PC-9 (cell line): ENCODE measurements at regions of chr17 and their contacts with region 1.

Region 1: DNA sequence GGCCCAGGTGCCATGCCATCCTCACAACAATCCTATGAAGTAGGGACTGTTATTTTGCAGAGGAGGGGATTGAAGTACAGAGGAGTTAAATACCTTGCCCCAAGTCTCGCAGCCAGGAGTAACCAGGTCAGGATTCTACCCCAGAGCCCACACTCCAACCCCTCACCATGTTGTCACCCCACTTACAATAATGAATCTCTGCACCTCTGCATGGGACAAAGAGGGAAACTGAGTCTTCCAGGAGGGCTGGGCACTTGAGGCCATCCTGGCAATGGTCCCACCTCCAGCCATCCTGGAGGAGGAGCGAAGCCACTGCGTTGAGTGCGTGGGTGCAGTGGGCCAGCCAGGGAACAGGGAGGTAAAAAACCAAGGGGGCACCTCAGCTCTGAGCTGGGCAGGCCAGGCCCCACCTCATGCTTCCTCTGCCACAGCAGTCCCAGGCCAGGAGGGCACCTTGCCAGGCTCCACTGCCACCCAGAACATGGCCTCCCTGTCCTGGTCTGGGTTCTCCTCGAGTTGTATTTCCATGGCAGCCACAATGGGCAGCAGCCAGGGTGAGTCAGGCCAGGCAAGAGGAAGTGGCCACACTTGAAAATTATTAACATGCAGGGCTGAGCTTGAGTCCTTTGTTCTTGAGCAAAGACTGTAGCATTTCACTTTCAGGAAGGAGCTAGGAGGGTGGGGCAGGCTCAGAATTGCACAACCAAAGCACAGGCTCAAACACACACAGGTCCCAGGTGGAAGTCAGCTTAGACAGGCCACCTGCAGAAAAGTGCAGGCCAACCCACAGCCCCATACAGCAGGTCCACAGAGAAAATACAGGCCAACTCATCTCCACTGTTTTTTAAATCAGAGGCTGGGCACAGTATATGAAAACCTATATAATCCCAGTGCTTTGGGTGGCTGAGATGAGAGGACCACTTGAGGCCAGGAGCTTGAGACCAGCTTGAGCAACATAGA is 52.1 kb downstream of the CUEDC1 start:
- DNase-seq: peak; percentile 87 to 99
- H3K4me3 ChIP-seq: no peak overlapping the region
- H3K27ac ChIP-seq: peak overlapping the region; percentile 69
- H3K4me1 ChIP-seq: peaks cover 65% of the 10 kb centered on the region
- H3K27me3 ChIP-seq: no peaks in the 10 kb centered on the region
- CTCF ChIP-seq: no peak

Region 2: GRCh38 chr17:56679115-56679766 is 1223.8 kb before region 1 on chr17:
- CTCF ChIA-PET with region 1: no interaction called
- POLR2A ChIA-PET with region 1: no interaction called
- intact Hi-C with region 1: no loop called
- DNase-seq: no peak
- H3K4me3 ChIP-seq: peak overlapping the region; percentile 4; the same call in 1 of the 2 replicates
- H3K27ac ChIP-seq: peak overlapping the region; percentile 96
- H3K4me1 ChIP-seq: peaks cover 100% of the 10 kb centered on the region
- H3K27me3 ChIP-seq: no peaks in the 10 kb centered on the region
- CTCF ChIP-seq: peak; percentile 80

Region 3: GRCh38 chr17:57875309-57876115 is 27.6 kb before region 1 on chr17:
- CTCF ChIA-PET with region 1: interaction called, 3 read pairs
- POLR2A ChIA-PET with region 1: no interaction called
- intact Hi-C with region 1: loop called (anchors 1 kb)
- DNase-seq: peak; percentile 88 to 92
- H3K4me3 ChIP-seq: no peak overlapping the region
- H3K27ac ChIP-seq: no peak overlapping the region
- H3K4me1 ChIP-seq: peaks cover 55% of the 10 kb centered on the region
- H3K27me3 ChIP-seq: no peaks in the 10 kb centered on the region
- CTCF ChIP-seq: peak; percentile 77

Region 4: DNA sequence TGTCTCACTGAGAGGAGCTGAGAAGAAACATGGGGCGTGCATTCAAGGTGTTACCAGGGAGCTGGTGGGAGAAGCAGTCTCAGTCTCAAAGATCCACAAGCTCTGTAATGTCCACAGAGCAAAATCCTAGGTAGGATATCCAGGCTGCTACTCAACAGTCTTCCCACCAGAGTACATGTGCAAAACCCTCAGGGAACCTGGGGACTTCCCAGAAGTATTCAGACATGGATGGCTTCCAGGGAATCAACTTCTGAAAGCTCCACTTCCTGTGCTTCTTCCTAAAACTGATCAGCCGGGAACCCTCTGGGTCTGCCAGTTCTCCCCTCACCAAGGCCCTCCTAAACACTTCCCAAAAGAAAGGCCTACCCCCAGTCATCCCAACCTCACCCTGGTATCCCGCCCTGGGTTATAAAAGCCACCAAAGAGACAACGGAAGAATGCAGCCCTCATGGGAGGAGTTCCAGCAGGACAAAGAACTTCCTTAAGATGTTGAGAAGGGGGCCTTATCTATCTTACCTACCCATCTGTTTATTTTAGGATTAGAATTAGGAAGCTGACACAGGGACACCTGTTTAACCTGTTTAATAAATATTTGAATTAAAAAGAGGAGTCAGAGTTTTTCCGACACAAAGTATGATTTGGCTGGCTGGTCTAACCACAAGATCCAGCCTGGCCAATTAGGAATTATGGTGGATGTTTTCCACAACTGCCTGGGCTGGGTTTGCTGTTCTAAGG is 15.1 kb after region 1 on chr17:
- CTCF ChIA-PET with region 1: no interaction called
- POLR2A ChIA-PET with region 1: no interaction called
- intact Hi-C with region 1: loop called (anchors 1 kb)
- DNase-seq: peak in 1 of 2 experiments; percentile 84
- H3K4me3 ChIP-seq: no peak overlapping the region
- H3K27ac ChIP-seq: peak overlapping the region; percentile 2
- H3K4me1 ChIP-seq: peaks cover 51% of the 10 kb centered on the region
- H3K27me3 ChIP-seq: no peaks in the 10 kb centered on the region
- CTCF ChIP-seq: no peak

Region 5: GRCh38 chr17:57946798-57947358 is 43.8 kb after region 1 on chr17:
- CTCF ChIA-PET with region 1: interaction called, 4 read pairs
- POLR2A ChIA-PET with region 1: interaction called, 6 read pairs
- intact Hi-C with region 1: loop called (anchors 1 kb)
- DNase-seq: peak in 1 of 2 experiments; percentile 60
- H3K4me3 ChIP-seq: no peak overlapping the region
- H3K27ac ChIP-seq: peak overlapping the region; percentile 95
- H3K4me1 ChIP-seq: peaks cover 63% of the 10 kb centered on the region
- H3K27me3 ChIP-seq: no peaks in the 10 kb centered on the region
- CTCF ChIP-seq: no peak

Region 6: DNA sequence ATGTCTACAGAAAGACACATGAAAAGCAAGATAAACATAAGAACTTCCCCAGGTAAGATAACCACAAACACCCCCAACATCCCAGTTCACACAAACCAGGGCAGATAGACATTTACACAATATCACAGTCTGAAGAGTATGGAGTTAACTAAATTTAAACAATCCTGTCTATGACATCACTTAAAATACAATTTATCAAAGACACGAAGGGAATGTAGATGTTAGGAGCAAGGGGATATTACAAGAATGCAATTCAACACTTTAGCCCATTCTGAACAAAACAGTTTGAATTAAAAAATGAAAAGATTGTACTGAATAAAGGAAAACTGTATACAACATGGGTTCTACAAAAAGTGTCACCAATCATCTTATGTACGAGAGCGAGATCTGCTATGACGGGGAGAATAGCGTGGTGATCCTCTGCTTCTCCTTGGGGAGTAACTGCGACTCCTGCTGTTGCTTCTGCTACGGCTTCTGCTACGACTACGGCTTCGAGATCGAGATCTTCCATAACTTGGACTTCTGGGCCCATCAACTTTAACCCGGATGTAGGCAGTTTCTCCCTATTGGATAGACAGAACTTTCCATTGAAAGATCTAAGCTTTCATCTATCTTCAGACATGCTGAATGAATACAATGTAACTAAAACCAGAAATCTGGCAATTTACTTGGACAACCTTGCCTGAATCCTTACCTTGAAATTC is 102.1 kb after region 1 on chr17:
- CTCF ChIA-PET with region 1: no interaction called
- POLR2A ChIA-PET with region 1: no interaction called
- intact Hi-C with region 1: no loop called
- DNase-seq: no peak
- H3K4me3 ChIP-seq: peak overlapping the region; percentile 95
- H3K27ac ChIP-seq: 0 out of 2 replicates have a peak overlapping the region, but pooled peaks have one; percentile 95
- H3K4me1 ChIP-seq: peaks cover 38% of the 10 kb centered on the region
- H3K27me3 ChIP-seq: no peaks in the 10 kb centered on the region
- CTCF ChIP-seq: no peak; the same call in 1 of the 2 replicates